Activated CD8-positive, alpha-beta memory T cell treated with anti-CD3 and anti-CD28 coated beads, Interleukin-2, amount 10 ng/mL, durations not matched to agents 7 days and 5 days (primary cell): ENCODE measurements at regions of chr1 and their contacts with region 1.

Region 1: DNA sequence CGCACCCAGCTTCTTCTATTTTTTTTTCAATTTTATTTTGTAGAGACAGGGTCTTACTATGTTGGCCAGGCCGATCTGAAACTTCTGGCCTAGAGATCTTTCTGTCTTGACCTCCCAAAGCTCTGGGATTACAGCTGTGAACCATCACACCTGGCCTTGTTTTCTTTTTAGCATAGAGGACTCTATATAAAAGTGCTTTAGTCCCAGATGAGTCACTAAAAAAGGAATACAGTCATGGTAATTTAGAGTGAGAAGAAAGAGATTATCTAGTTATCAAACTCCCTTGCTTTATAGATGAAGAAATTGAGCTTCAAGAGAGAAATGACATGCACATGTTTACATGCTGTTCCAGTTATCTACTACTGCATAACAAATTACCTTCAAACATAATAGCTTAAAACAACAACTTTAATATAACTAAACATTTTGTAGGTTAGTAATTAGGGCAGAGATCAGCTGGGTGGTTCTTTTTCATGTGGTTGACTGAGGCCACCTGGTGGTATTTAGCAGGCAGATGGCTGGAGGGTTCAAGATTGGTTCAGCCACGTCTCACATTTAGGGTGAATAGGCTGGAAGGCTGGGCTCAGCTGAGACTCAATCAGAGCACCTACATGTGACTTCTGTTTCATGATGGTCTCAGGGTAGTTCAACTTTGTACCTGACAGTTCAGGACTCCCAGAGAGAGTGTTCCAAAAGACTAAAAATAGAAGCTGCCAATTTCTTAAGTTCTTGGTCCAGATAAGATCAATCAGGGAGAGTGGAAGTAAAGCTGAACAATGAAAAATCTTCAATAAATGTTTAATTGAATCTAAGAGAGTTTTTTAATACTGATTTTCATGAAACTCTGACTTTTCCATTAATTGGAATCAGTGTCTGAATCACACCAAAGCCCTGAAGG is 16.9 kb upstream of the MTF2 start:
- DNase-seq: peak; percentile 69
- ATAC-seq: peak; percentile 77
- H3K4me3 Mint-ChIP-seq: no peak overlapping the region
- H3K27ac Mint-ChIP-seq: no peak overlapping the region
- H3K4me1 Mint-ChIP-seq: peaks cover 2% of the 10 kb centered on the region
- H3K27me3 Mint-ChIP-seq: peaks cover 50% of the 10 kb centered on the region

Region 2: DNA sequence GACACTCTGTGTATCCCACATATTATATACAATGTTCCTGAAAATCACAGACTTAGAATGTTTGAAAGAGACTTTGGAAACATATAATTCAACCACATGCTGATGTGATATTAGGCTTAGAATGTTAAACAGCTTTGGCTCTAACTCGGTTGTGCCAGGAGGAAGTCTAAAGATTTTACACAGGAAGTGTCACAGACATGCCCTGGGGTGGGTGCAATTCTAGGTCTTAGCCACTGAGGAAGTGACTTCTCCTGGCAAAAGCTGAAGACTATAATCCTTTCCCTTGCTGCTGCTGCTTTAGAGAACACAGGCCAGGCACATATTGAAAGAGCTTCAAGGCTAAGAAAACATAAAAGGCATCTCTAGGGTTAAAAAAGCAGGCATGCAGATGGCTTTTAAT is 179.3 kb before region 1 on chr1:
- CTCF ChIA-PET with region 1: no interaction called
- DNase-seq: peak; percentile 61
- ATAC-seq: peak; percentile 91
- H3K4me3 Mint-ChIP-seq: no peak overlapping the region
- H3K27ac Mint-ChIP-seq: peak overlapping the region; percentile 66
- H3K4me1 Mint-ChIP-seq: peaks cover 26% of the 10 kb centered on the region
- H3K27me3 Mint-ChIP-seq: no peaks in the 10 kb centered on the region

Region 3: GRCh38 chr1:92960395-92961130 is 101.6 kb before region 1 on chr1:
- CTCF ChIA-PET with region 1: interaction called, 10 read pairs
- DNase-seq: peak; percentile 81
- ATAC-seq: peak; percentile 50
- H3K4me3 Mint-ChIP-seq: no peak overlapping the region
- H3K27ac Mint-ChIP-seq: peak overlapping the region; percentile 96
- H3K4me1 Mint-ChIP-seq: peaks cover 38% of the 10 kb centered on the region
- H3K27me3 Mint-ChIP-seq: no peaks in the 10 kb centered on the region

Region 4: GRCh38 chr1:93014168-93014567 is 48.0 kb before region 1 on chr1:
- CTCF ChIA-PET with region 1: interaction called, 10 read pairs
- DNase-seq: no peak
- ATAC-seq: no peak
- H3K4me3 Mint-ChIP-seq: no peak overlapping the region
- H3K27ac Mint-ChIP-seq: no peak overlapping the region
- H3K4me1 Mint-ChIP-seq: peaks cover 22% of the 10 kb centered on the region
- H3K27me3 Mint-ChIP-seq: peaks cover 26% of the 10 kb centered on the region

Region 5: DNA sequence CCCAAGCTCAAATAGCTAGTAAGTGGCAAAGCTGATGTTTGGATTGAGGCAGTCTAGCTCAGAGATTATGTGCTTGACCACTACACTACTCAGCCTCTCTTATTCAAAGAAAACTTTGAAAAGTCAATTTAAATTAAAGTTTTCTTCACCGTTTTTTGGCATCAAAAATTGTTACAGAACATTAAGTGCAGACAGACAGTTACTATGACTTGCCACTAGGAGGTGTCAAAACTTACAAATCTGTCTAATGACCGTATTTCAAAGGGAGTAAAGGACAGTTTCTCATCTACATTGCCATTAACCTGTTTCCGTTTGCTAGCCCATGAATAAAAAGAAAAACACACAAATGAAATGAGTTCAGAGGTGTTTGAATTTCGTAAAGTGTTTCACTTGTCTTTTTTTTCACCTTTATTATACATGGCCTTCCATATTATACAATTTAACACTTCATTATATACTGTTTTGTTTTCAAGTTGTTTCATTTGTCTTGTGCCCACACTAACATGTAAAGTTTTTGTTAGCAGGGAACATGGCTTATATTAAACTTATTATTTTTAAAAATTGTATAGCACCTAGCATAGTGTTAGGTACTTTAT is 40.5 kb before region 1 on chr1:
- CTCF ChIA-PET with region 1: interaction called, 23 read pairs
- DNase-seq: no peak
- ATAC-seq: peak; percentile 84
- H3K4me3 Mint-ChIP-seq: no peak overlapping the region
- H3K27ac Mint-ChIP-seq: no peak overlapping the region
- H3K4me1 Mint-ChIP-seq: peaks cover 12% of the 10 kb centered on the region
- H3K27me3 Mint-ChIP-seq: peaks cover 35% of the 10 kb centered on the region

Region 6: GRCh38 chr1:93042187-93043056 is 19.7 kb before region 1 on chr1:
- CTCF ChIA-PET with region 1: interaction called, 15 read pairs
- DNase-seq: peak; percentile 71
- ATAC-seq: peak; percentile 99
- H3K4me3 Mint-ChIP-seq: peak overlapping the region; percentile 74
- H3K27ac Mint-ChIP-seq: peak overlapping the region; percentile 97
- H3K4me1 Mint-ChIP-seq: peaks cover 33% of the 10 kb centered on the region
- H3K27me3 Mint-ChIP-seq: no peaks in the 10 kb centered on the region

Region 7: GRCh38 chr1:93047618-93048017 is 14.5 kb before region 1 on chr1:
- CTCF ChIA-PET with region 1: interaction called, 15 read pairs
- DNase-seq: no peak
- ATAC-seq: no peak
- H3K4me3 Mint-ChIP-seq: no peak overlapping the region
- H3K27ac Mint-ChIP-seq: peak overlapping the region; percentile 3
- H3K4me1 Mint-ChIP-seq: peaks cover 5% of the 10 kb centered on the region
- H3K27me3 Mint-ChIP-seq: no peaks in the 10 kb centered on the region